Mammary epithelial cell (primary cell): ENCODE measurements at regions of chr9 and their contacts with region 1.

Region 1: GRCh38 chr9:23563517-23563916 is 262.5 kb downstream of the ELAVL2 start:
- DNase-seq: peak; percentile 27
- H3K4me3 ChIP-seq: no peak overlapping the region
- H3K27ac ChIP-seq: no peak overlapping the region
- H3K4me1 ChIP-seq: no peaks in the 10 kb centered on the region
- H3K27me3 ChIP-seq: no peaks in the 10 kb centered on the region
- CTCF ChIP-seq: no peak

Region 2: DNA sequence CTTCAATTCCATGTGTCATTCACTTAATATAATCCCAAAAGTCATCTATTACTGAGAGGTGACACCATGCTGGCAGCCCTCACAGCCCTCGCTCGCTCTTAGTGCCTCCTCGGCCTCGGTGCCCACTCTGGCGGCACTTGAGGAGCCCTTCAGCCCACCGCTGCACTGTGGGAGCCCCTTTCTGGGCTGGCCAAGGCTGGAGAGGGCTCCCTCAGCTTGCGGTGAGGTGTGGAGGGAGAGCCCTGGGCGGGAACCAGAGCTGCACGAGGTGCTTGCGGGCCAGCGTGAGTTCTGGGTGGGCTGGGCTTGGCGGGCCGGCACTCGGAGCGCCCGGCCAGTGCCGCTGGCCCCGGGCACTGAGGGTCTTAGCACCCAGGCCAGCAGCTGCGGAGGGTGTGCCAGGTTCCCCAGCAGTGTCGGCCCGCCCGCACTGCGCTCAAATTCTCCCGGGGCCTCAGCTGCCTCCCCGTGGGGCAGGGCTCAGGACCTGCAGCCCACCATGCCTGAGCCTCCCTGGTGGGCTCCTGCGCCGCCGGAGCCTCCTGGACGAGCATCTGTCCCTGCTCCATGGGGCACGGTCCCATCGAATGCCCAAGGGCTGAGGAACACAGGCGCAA is 111.6 kb before region 1 on chr9:
- CTCF ChIA-PET with region 1: no interaction called
- dilution Hi-C with region 1: no loop called
- in situ Hi-C with region 1: no loop called
- intact Hi-C with region 1: no loop called
- DNase-seq: no peak
- H3K4me3 ChIP-seq: no peak overlapping the region
- H3K27ac ChIP-seq: no peak overlapping the region
- H3K4me1 ChIP-seq: no peaks in the 10 kb centered on the region
- H3K27me3 ChIP-seq: no peaks in the 10 kb centered on the region
- CTCF ChIP-seq: no peak

Region 3: GRCh38 chr9:23611869-23612268 is 48.4 kb after region 1 on chr9:
- CTCF ChIA-PET with region 1: no interaction called
- dilution Hi-C with region 1: loop called (anchors 5 kb)
- in situ Hi-C with region 1: no loop called
- intact Hi-C with region 1: no loop called
- DNase-seq: no peak
- H3K4me3 ChIP-seq: no peak overlapping the region
- H3K27ac ChIP-seq: no peak overlapping the region
- H3K4me1 ChIP-seq: no peaks in the 10 kb centered on the region
- H3K27me3 ChIP-seq: no peaks in the 10 kb centered on the region
- CTCF ChIP-seq: no peak